ENCODE measurements at regions of chr17 and their contacts with region 1.

Region 1: GRCh38 chr17:8630802-8631553 is 453 bp upstream of the MYH10 start:
- DNase-seq: peak; percentile 96
- H3K4me3 Mint-ChIP-seq: peak overlapping the region; percentile 95
- H3K27ac Mint-ChIP-seq: no peak overlapping the region
- H3K4me1 Mint-ChIP-seq: peaks cover 7% of the 10 kb centered on the region
- H3K27me3 Mint-ChIP-seq: peaks cover 34% of the 10 kb centered on the region

Region 2: GRCh38 chr17:8435245-8436168 is 195.5 kb before region 1 on chr17 and contains the start of gene NDEL1:
- CTCF ChIA-PET with region 1: interaction called, 4 read pairs
- POLR2A ChIA-PET with region 1: interaction called, 3 read pairs
- intact Hi-C with region 1: loop called (anchors 2 kb)
- DNase-seq: peak; percentile 99
- H3K4me3 Mint-ChIP-seq: peak within 1 kb of the TSS; percentile 92
- H3K27ac Mint-ChIP-seq: peak within 1 kb of the TSS; percentile 91
- H3K4me1 Mint-ChIP-seq: peaks cover 31% of the 10 kb centered on the region
- H3K27me3 Mint-ChIP-seq: no peaks in the 10 kb centered on the region
- total RNA-seq, gene NDEL1: 58.0 to 62.8 TPM

Measured in activated CD4-positive, alpha-beta memory T cell treated with anti-CD3 and anti-CD28 coated beads for 36 hours (primary cell).